GM10248 (cell line): ENCODE measurements at regions of chr1 and their contacts with region 1.

Region 1: DNA sequence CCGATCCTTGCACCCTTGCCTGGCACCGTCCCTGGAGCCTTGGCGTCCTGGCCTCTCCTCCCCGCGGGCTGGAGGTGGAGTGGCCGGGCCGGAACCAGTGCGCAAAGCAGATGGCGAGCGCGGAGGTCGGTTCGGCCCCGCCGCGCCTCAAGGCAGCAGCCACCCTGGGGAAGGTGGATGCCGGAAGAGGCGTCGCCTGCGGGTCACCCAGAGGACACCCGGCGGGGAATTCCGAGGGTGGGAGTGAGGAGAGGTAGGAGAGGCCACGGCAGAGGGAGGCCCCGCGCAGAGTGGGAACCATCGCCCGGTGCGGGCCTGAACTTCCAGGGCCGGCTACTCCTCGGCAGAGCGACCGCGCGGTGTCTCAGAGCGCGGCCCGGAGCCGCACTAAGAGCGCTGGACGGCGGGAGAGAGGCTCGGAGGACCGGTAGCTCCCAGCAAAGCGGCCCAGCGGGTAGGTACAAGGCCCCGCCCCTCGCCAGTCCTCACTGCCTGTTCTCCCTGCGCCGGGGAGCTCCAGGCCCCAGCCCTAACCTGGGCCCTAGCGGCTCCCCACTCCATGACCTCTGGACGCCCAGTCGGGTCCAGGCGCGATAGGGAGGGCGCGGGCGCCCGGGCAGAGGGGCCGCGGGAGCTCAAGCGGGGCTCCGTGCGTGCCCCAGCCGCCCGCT is at the start of gene RNF207:
- DNase-seq: peak; percentile 92
- CTCF ChIP-seq: no peak

Region 2: DNA sequence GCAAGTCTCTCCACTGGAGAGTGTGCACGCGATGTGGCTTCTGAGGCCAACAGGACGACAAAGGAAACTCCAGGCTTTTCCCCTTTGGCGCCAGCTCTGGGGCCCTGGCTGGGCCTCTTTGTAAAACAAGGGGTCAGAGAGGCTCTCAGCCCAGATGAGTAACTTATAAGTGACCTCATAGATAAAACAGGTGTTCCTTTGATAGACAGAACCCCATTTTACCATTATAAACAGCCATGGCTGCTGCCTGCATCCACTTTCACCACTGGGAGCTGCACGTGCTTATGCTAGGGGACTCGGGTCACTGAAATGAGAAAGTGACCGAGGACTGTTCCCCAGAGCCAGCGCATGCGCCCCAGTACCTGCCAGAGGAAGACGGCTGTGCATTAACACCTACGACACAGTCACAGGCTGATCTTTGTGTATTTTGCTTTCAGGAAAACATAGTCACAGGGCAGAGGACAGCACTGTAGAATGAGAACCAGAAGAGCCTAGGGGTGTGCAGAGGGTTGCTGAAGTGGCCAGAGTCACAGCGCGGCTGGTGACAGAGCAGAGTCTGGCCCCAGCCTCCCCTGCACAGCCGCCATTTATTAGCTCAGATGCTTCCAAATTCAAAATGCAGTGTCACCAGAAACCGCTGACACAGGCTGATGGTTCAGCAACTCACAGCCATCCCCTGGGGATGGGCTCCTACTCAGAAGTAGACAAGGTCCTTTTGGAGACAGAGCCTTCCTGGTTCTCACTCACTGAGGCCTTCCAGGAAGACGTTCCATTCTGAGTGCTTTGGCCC is 12.6 kb after region 1 on chr1:
- CTCF ChIA-PET with region 1: interaction called, 27 read pairs
- POLR2A ChIA-PET with region 1: interaction called, 3 read pairs
- DNase-seq: no peak
- CTCF ChIP-seq: no peak

Region 3: GRCh38 chr1:6225651-6226050 is 19.7 kb after region 1 on chr1:
- CTCF ChIA-PET with region 1: interaction called, 11 read pairs
- POLR2A ChIA-PET with region 1: no interaction called
- DNase-seq: no peak
- CTCF ChIP-seq: no peak